Esophagus muscularis mucosa (tissue), 4 donors: ENCODE measurements at regions of chr4 and their contacts with region 1.

Region 1: GRCh38 chr4:42865572-42866189 is 26.8 kb upstream of the GRXCR1 start:
- DNase-seq: no peak
- H3K4me3 ChIP-seq: no peak overlapping the region
- H3K27ac ChIP-seq: no peak overlapping the region
- H3K4me1 ChIP-seq: no peaks in the 10 kb centered on the region
- H3K27me3 ChIP-seq: no peaks in the 10 kb centered on the region
- CTCF ChIP-seq: peak; percentile 53 to 79 (median 79)
- EP300 ChIP-seq: no peak
- POLR2A ChIP-seq: no peak

Region 2: GRCh38 chr4:42282081-42282901 is 583.4 kb before region 1 on chr4:
- intact Hi-C with region 1: loop called (anchors 10 kb)
- DNase-seq: no peak
- H3K4me3 ChIP-seq: no peak overlapping the region
- H3K27ac ChIP-seq: peak overlapping the region in 1 of 4 donors; percentile 14
- H3K4me1 ChIP-seq: peaks cover 0 to 11% (median 8%) of the 10 kb centered on the region in 4 donors
- H3K27me3 ChIP-seq: no peaks in the 10 kb centered on the region
- CTCF ChIP-seq: peak; percentile 61 to 71 (median 65)
- EP300 ChIP-seq: no peak
- POLR2A ChIP-seq: no peak

Region 3: DNA sequence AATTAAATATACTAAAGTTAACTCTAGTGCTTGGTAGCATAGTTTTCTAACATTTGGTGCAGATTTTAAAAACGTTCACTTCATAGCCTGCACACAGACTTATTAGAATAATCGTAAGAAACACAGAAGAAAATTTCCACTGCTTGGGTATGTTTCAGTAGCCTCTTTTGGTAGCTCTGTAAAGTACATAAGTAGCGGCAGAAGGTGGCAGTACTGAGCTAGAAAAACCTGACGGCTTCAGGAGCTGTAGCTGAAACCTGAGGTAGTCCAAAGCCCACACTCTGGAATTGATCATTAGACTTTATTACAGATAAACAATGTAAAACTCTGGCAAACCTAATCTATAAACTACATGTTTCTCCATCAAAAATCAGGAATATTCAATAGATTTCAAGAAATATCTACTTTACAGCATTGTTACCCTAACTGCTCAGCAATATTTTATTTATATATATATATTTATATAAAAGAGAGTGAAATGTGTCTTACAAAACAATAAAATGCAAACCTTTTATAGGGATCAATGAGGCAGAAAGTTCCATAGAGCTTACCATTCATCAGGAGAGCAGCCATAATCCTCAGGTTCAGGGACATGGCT is 297.0 kb before region 1 on chr4:
- intact Hi-C with region 1: loop called (anchors 2 kb)
- DNase-seq: no peak
- H3K4me3 ChIP-seq: no peak overlapping the region
- H3K27ac ChIP-seq: no peak overlapping the region
- H3K4me1 ChIP-seq: peaks cover 6 to 9% (median 9%) of the 10 kb centered on the region in 4 donors
- H3K27me3 ChIP-seq: no peaks in the 10 kb centered on the region
- CTCF ChIP-seq: peak; percentile 65 to 71 (median 69)
- EP300 ChIP-seq: no peak
- POLR2A ChIP-seq: no peak

Region 4: GRCh38 chr4:43014256-43014655 is 148.6 kb after region 1 on chr4:
- intact Hi-C with region 1: no loop called
- DNase-seq: no peak
- H3K4me3 ChIP-seq: no peak overlapping the region
- H3K27ac ChIP-seq: no peak overlapping the region
- H3K4me1 ChIP-seq: no peaks in the 10 kb centered on the region
- H3K27me3 ChIP-seq: no peaks in the 10 kb centered on the region
- CTCF ChIP-seq: no peak
- EP300 ChIP-seq: no peak
- POLR2A ChIP-seq: no peak